Caco-2 (cell line): ENCODE measurements at regions of chr14 and their contacts with region 1.

Region 1: DNA sequence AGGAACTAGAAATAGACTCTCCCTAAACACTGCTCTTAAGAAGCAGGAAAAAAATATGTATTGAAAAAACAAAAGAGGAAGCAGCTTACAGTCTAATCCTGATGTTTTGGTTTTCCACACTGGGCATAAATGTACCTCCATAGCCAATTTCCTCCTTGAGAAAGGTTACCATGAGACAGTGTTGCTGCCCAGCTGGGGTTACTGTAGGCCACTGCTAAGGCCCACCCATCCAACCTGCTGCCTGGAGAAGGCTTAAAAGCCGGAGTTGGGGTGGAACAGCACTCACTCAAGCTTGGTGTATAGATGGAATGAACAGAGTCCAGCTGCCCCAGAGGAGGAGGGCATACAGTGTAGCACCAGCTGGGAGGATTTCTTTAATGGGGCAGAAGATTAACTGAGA is 41.1 kb downstream of the ERG28 start:
- DNase-seq: no peak
- H3K4me3 ChIP-seq: no peak overlapping the region
- H3K4me3 Mint-ChIP-seq: no peak overlapping the region
- H3K27ac Mint-ChIP-seq: no peak overlapping the region
- H3K4me1 ChIP-seq: peaks cover 43% of the 10 kb centered on the region
- H3K4me1 Mint-ChIP-seq: peaks cover 23% of the 10 kb centered on the region
- H3K27me3 ChIP-seq: no peaks in the 10 kb centered on the region
- H3K27me3 Mint-ChIP-seq: no peaks in the 10 kb centered on the region
- CTCF ChIP-seq: no peak

Region 2: GRCh38 chr14:75654127-75654732 is 34.7 kb after region 1 on chr14:
- CTCF ChIA-PET with region 1: no interaction called
- POLR2A ChIA-PET with region 1: no interaction called
- intact Hi-C with region 1: loop called (anchors 1 kb)
- DNase-seq: peak; percentile 76 to 86
- H3K4me3 ChIP-seq: no peak overlapping the region
- H3K4me3 Mint-ChIP-seq: no peak overlapping the region
- H3K27ac Mint-ChIP-seq: no peak overlapping the region
- H3K4me1 ChIP-seq: peaks cover 21% of the 10 kb centered on the region
- H3K4me1 Mint-ChIP-seq: peaks cover 26% of the 10 kb centered on the region
- H3K27me3 ChIP-seq: no peaks in the 10 kb centered on the region
- H3K27me3 Mint-ChIP-seq: no peaks in the 10 kb centered on the region
- CTCF ChIP-seq: peak; percentile 95 to 96

Region 3: GRCh38 chr14:75794615-75795038 is 175.1 kb after region 1 on chr14:
- CTCF ChIA-PET with region 1: no interaction called
- POLR2A ChIA-PET with region 1: no interaction called
- intact Hi-C with region 1: no loop called
- DNase-seq: peak in 1 of 2 experiments; percentile 42
- H3K4me3 ChIP-seq: no peak overlapping the region
- H3K4me3 Mint-ChIP-seq: no peak overlapping the region
- H3K27ac Mint-ChIP-seq: no peak overlapping the region
- H3K4me1 ChIP-seq: no peaks in the 10 kb centered on the region
- H3K4me1 Mint-ChIP-seq: peaks cover 5% of the 10 kb centered on the region
- H3K27me3 ChIP-seq: no peaks in the 10 kb centered on the region
- H3K27me3 Mint-ChIP-seq: no peaks in the 10 kb centered on the region
- CTCF ChIP-seq: peak; percentile 28 to 57